HCT116 (cell line): ENCODE measurements at regions of chr7 and their contacts with region 1.

Region 1: DNA sequence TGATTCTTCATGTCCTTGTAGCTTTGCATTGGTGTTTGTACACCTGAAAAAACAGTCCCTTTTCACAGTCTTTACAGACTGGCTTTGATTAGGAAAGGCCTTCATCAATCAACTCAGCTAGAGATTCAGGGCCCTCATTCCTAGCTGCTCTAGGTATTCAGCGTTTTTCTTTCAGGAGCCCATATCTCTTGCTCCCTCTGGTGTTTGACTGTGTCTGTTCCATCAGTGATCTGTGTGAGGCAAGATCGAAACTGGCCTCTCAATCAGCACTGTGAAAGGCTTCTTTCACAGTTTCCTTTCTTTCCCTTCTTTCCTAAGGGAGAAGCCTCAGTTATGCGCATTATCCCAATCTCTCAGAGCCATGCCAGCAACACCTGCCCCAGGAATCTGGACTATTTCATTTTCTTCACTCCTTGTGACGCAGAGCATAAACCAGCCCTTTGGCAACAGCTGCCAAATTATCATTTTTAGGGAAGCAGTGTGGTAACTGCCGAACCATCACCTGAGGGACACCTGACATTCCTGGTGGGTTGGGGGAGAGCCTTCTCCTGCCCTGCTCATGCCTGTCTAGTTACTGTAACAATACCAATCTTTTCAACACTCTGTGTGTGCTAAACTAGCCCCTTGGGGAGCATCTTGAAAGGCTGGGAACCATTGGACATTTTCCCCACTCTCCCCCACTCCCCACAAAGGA is 75.7 kb upstream of the CCDC71L start:
- DNase-seq: peak; percentile 73
- ATAC-seq: peak; percentile 98
- H3K4me3 ChIP-seq: peak overlapping the region in 1 of 2 experiments; percentile 17; a peak in 1 of 4 replicates
- H3K27ac ChIP-seq: peak overlapping the region; percentile 30
- H3K4me1 ChIP-seq: peaks cover 0 to 12% of the 10 kb centered on the region in 2 experiments; a peak in 2 of 4 replicates
- H3K27me3 ChIP-seq: no peaks in the 10 kb centered on the region
- CTCF ChIP-seq: peak; percentile 71 to 97 (median 82)
- POLR2A ChIP-seq: no peak
- RAD21 ChIP-seq: peak; percentile 95

Region 2: DNA sequence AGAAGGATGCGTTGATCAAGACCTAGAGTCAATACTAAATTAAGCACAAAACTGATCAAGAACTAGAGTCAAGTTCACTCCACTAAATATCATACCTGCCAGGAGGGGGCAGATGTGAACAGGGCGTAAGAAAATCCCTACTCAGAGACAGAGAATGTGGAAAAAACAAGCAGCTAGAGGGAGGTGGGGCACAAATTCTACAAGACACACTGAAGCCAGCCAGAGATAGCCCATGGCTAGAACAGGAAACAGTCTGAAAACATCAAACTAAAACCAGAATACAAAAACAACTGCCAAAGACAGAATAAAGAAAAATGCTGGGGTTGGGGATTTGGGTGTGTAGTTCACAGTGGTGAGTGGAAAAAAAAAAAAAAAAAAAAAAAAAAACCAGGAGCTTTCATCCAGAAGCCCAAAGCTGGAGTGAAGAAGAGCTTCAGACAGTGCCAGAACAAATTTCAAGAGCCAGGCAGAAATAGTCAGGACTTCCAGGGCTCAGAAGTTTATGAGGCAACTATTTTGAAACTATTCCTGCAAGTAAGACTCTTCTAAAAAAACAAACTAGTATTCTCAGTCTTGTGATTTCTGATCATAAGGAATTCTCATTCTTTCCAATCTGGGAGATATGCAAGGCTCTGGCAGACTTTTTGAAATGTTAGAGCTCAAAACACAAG is 194.0 kb before region 1 on chr7:
- CTCF ChIA-PET with region 1: interaction called, 71 read pairs
- POLR2A ChIA-PET with region 1: interaction called, 4 read pairs
- RAD21 ChIA-PET with region 1: interaction called, 10 to 15 read pairs
- intact Hi-C with region 1: loop called (anchors 1 kb)
- DNase-seq: peak; percentile 77
- ATAC-seq: peak; percentile 97
- H3K4me3 ChIP-seq: no peak overlapping the region
- H3K27ac ChIP-seq: no peak overlapping the region
- H3K4me1 ChIP-seq: peaks cover 0 to 14% of the 10 kb centered on the region in 2 experiments; a peak in 3 of 4 replicates
- H3K27me3 ChIP-seq: no peaks in the 10 kb centered on the region
- CTCF ChIP-seq: peak; percentile 68 to 96 (median 80)
- POLR2A ChIP-seq: no peak
- RAD21 ChIP-seq: peak; percentile 91